BJ (cell line): ENCODE measurements at regions of chr17 and their contacts with region 1.

Region 1: GRCh38 chr17:10844621-10845387 is 6.9 kb upstream of the PIRT start:
- DNase-seq: no peak
- H3K4me3 ChIP-seq: peak overlapping the region; percentile 45
- H3K27me3 ChIP-seq: no peaks in the 10 kb centered on the region
- CTCF ChIP-seq: peak; percentile 89

Region 2: GRCh38 chr17:10631048-10631700 is 213.6 kb before region 1 on chr17:
- CTCF ChIA-PET with region 1: interaction called, 44 read pairs
- POLR2A ChIA-PET with region 1: no interaction called
- DNase-seq: no peak
- H3K4me3 ChIP-seq: no peak overlapping the region
- H3K27me3 ChIP-seq: no peaks in the 10 kb centered on the region
- CTCF ChIP-seq: peak; percentile 94

Region 3: DNA sequence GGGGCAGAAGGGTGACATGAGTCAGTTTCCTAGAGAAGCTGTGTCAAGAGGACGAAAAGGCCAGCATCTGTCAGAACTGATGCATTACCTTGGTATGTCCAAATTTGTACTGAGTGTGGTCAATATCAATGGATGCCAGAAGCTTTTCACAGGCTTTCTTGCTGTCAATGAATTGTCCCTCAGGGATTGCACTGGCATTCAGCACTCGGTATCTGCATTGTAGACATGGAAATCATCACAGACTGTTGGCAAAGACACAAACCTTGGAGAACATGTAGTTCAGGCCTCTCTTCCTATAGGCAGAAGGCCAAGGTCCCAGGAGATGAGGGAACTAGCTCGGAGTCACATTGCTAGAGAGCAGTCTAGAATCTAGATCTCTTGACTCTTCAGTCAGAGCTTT is 204.3 kb before region 1 on chr17:
- CTCF ChIA-PET with region 1: interaction called, 72 read pairs
- POLR2A ChIA-PET with region 1: no interaction called
- DNase-seq: no peak
- H3K4me3 ChIP-seq: no peak overlapping the region
- H3K27me3 ChIP-seq: no peaks in the 10 kb centered on the region
- CTCF ChIP-seq: no peak